MCF 10A (cell line): ENCODE measurements at regions of chr2 and their contacts with region 1.

Region 1: DNA sequence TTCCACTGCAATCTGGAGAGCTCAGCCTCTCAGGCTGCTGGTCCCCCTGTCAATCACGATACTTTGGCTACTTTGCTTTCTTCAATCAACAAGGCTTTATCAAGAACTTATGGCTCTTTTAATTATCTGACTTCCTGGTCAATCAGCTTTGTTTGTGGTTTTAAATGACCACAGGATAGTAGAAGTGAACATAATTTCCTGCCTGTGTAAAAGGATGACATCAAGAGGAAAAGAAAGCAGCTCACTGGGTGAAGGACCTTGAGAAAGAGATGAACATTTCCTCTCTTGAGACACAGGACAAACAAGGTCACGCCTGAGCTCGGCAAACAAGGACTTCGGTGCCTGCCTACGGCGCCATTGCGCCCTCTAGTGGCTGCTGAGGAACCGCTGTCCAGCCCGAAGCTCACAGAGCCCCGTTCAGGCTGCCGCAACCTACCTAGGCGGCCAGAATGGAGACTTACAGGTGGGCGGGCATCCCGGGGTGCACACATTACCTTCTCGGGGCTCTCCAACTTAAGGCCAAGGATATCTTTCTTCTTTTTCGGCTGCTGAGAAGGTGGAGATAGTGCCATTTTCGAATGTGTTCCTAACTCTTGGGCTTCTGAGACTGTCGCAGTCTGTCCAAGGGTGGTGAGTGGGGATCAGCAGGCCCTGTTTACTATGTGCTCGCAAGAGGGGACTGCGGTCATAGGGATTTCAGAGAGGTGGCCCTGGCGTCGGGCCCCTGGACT is 54.0 kb downstream of the IL1RL2 start:
- DNase-seq: peak; percentile 87
- H3K4me3 Mint-ChIP-seq: no peak overlapping the region
- H3K27ac Mint-ChIP-seq: no peak overlapping the region
- H3K4me1 Mint-ChIP-seq: peaks cover 6% of the 10 kb centered on the region
- H3K27me3 Mint-ChIP-seq: no peaks in the 10 kb centered on the region
- CTCF ChIP-seq: peak; percentile 97

Region 2: DNA sequence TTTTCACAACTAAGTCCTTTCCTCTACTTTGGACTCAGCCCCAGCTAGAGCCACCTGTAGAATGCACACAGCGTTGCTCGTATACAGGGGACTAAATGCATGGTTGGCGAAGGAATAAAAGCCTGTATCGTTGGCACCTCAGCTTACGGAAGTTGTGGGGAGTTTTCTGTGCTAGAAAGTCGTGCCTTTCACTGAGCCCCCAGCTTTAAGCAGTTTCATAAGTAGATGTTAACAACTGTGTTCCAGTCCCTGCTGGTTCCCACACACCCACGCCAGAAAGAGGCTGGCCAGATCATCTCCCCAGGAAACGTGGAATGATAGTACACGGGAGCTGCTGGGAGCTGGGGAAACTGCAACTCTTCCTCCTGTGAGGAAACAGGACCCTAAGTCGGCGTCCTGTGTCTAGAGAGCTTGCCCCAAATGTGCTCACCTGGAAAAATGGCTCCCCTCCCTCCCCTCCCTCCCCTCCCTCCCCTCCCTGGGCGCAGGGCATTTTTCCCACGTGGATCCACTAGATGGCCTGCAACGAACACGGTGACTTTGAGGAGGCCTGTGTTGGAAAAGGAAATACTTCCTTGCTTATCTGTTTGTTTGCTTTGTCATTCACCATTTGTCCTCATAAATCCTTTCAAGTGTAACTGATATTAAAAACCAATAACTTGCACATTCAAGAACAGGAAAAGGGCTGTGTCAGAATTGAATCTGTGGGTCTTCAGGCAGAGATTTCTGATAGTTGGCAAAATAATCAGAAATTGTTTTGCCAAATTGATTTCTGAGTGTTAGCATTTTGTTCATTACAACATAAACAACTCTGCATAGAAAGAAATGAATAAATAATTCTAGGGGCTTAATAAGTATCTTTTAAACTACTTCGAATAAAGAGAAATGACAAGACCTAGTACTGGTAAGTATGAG is 722.0 kb before region 1 on chr2:
- CTCF ChIA-PET with region 1: no interaction called
- POLR2A ChIA-PET with region 1: no interaction called
- intact Hi-C with region 1: no loop called
- DNase-seq: peak; percentile 81
- H3K4me3 Mint-ChIP-seq: peak overlapping the region; percentile 44
- H3K27ac Mint-ChIP-seq: no peak overlapping the region
- H3K4me1 Mint-ChIP-seq: peaks cover 25% of the 10 kb centered on the region
- H3K27me3 Mint-ChIP-seq: no peaks in the 10 kb centered on the region
- CTCF ChIP-seq: peak; percentile 30

Region 3: GRCh38 chr2:102005989-102006885 is 234.6 kb before region 1 on chr2:
- CTCF ChIA-PET with region 1: interaction called, 37 read pairs
- POLR2A ChIA-PET with region 1: interaction called, 4 read pairs
- intact Hi-C with region 1: loop called (anchors 1 kb)
- DNase-seq: peak; percentile 71
- H3K4me3 Mint-ChIP-seq: no peak overlapping the region
- H3K27ac Mint-ChIP-seq: no peak overlapping the region
- H3K4me1 Mint-ChIP-seq: no peaks in the 10 kb centered on the region
- H3K27me3 Mint-ChIP-seq: no peaks in the 10 kb centered on the region
- CTCF ChIP-seq: peak; percentile 56

Region 4: DNA sequence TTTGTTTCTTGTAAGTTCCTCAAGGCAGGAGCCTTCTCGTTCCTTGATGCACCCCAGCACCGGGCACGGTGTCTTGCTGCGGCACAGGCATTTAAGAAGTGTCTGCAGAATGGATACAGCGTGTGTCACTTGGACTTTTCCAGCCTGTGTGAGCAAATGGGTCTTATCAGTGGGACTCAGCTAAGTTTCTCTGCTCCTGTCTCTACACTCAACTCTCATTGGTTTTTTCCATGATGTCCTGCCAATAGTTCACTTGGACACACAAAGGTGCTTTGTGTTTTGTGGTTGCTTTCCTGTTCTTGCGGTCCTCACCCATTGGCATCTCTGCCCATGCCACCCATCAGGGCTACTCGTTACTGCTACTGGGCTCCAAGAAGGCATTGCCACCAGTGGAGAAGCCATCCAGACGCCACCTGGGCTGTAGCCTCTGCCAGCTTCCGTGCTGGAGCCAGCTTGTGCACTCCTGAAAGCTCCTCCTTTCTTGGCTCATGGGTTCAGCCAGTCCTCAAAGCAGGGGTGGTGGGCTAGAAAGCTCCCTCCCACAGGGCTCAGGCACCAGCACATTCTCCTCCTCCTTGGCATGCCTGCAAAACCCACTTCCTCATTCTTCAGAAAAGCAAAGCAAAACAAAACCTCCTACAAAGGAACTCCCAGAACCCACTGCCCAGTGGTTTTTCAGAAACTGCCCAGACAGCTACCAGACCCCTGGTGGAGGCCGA is 207.6 kb before region 1 on chr2:
- CTCF ChIA-PET with region 1: interaction called, 65 read pairs
- POLR2A ChIA-PET with region 1: no interaction called
- intact Hi-C with region 1: no loop called
- DNase-seq: peak; percentile 77
- H3K4me3 Mint-ChIP-seq: peak overlapping the region; percentile 54
- H3K27ac Mint-ChIP-seq: peak overlapping the region; percentile 86
- H3K4me1 Mint-ChIP-seq: peaks cover 21% of the 10 kb centered on the region
- H3K27me3 Mint-ChIP-seq: no peaks in the 10 kb centered on the region
- CTCF ChIP-seq: no peak

Region 5: DNA sequence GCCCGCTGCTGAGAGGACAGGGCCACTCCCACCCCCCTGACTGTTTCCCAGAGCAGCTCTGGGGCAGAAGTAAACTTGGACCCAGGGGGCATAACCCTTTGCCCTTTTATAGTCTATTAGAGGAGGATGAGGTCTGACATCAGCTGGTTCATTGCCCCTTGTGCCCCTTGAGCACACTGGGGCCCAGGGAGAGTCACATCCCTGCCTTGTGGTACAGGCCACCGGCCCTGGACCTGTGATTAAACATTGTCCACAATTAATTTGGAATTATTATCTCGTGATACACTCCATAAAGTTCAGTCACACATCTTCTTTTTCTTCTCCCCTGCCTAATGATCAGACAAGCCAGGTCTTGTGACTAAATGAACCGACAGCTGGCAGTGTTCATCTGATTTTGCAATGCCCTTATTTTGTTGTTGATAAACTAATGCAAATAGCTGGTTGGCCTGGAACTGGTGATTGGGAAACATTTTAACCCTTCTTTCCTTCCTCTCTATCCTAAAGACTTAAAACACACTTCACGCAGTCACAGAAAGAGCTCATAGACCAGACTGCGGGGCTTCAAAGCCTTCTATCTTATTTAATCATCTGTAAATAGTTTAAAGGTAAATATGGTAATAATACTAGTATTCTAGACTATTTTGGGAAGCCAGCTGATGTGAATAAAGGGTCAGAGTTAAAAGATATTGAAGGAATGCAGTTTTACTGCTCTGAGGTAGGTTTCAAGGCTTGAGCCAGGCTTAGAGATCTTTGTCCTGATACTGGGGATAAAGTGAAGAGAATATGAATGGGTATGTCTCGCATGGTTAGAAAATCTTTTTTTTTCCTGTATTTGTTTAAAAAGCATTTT is 84.9 kb before region 1 on chr2:
- CTCF ChIA-PET with region 1: interaction called, 17 read pairs
- POLR2A ChIA-PET with region 1: interaction called, 10 read pairs
- intact Hi-C with region 1: no loop called
- DNase-seq: peak; percentile 62
- H3K4me3 Mint-ChIP-seq: no peak overlapping the region
- H3K27ac Mint-ChIP-seq: peak overlapping the region; percentile 94
- H3K4me1 Mint-ChIP-seq: peaks cover 30% of the 10 kb centered on the region
- H3K27me3 Mint-ChIP-seq: no peaks in the 10 kb centered on the region
- CTCF ChIP-seq: no peak

Region 6: GRCh38 chr2:102206666-102207341 is 34.0 kb before region 1 on chr2:
- CTCF ChIA-PET with region 1: interaction called, 12 read pairs
- POLR2A ChIA-PET with region 1: no interaction called
- intact Hi-C with region 1: no loop called
- DNase-seq: no peak
- H3K4me3 Mint-ChIP-seq: no peak overlapping the region
- H3K27ac Mint-ChIP-seq: no peak overlapping the region
- H3K4me1 Mint-ChIP-seq: no peaks in the 10 kb centered on the region
- H3K27me3 Mint-ChIP-seq: no peaks in the 10 kb centered on the region
- CTCF ChIP-seq: no peak

Region 7: GRCh38 chr2:102355526-102356380 is 114.9 kb after region 1 on chr2 and contains the start of gene IL18R1:
- CTCF ChIA-PET with region 1: interaction called, 14 read pairs
- POLR2A ChIA-PET with region 1: interaction called, 4 read pairs
- intact Hi-C with region 1: no loop called
- DNase-seq: peak; percentile 71
- H3K4me3 Mint-ChIP-seq: peak within 1 kb of the TSS; percentile 87
- H3K27ac Mint-ChIP-seq: peak within 1 kb of the TSS; percentile 68
- H3K4me1 Mint-ChIP-seq: peaks cover 19% of the 10 kb centered on the region
- H3K27me3 Mint-ChIP-seq: no peaks in the 10 kb centered on the region
- CTCF ChIP-seq: peak; percentile 85
- total RNA-seq, gene IL18R1: 3.5 and 6.7 TPM in 2 replicates

Region 8: GRCh38 chr2:103132536-103133217 is 891.9 kb after region 1 on chr2:
- CTCF ChIA-PET with region 1: no interaction called
- POLR2A ChIA-PET with region 1: no interaction called
- intact Hi-C with region 1: no loop called
- DNase-seq: no peak
- H3K4me3 Mint-ChIP-seq: no peak overlapping the region
- H3K27ac Mint-ChIP-seq: no peak overlapping the region
- H3K4me1 Mint-ChIP-seq: no peaks in the 10 kb centered on the region
- H3K27me3 Mint-ChIP-seq: peaks cover 58% of the 10 kb centered on the region
- CTCF ChIP-seq: no peak